PC-9 (cell line): ENCODE measurements at regions of chr1 and their contacts with region 1.

Region 1: GRCh38 chr1:71542155-71542554 is 461.3 kb upstream of the ZRANB2 start:
- DNase-seq: no peak
- H3K4me3 ChIP-seq: no peak overlapping the region
- H3K27ac ChIP-seq: no peak overlapping the region
- H3K4me1 ChIP-seq: no peaks in the 10 kb centered on the region
- H3K27me3 ChIP-seq: no peaks in the 10 kb centered on the region
- CTCF ChIP-seq: no peak

Region 2: GRCh38 chr1:71561729-71562128 is 19.6 kb after region 1 on chr1:
- CTCF ChIA-PET with region 1: no interaction called
- POLR2A ChIA-PET with region 1: no interaction called
- intact Hi-C with region 1: loop called (anchors 1 kb)
- DNase-seq: no peak
- H3K4me3 ChIP-seq: no peak overlapping the region
- H3K27ac ChIP-seq: no peak overlapping the region
- H3K4me1 ChIP-seq: no peaks in the 10 kb centered on the region
- H3K27me3 ChIP-seq: no peaks in the 10 kb centered on the region
- CTCF ChIP-seq: no peak

Region 3: GRCh38 chr1:71572038-71572437 is 29.9 kb after region 1 on chr1:
- CTCF ChIA-PET with region 1: no interaction called
- POLR2A ChIA-PET with region 1: no interaction called
- intact Hi-C with region 1: no loop called
- DNase-seq: no peak
- H3K4me3 ChIP-seq: no peak overlapping the region
- H3K27ac ChIP-seq: no peak overlapping the region
- H3K4me1 ChIP-seq: no peaks in the 10 kb centered on the region
- H3K27me3 ChIP-seq: no peaks in the 10 kb centered on the region
- CTCF ChIP-seq: no peak